ENCODE measurements at regions of chr14 and their contacts with region 1.

Region 1: GRCh38 chr14:33839193-33840076 is 111.4 kb downstream of the EGLN3 start:
- DNase-seq: no peak
- H3K4me3 ChIP-seq: no peak overlapping the region
- H3K27ac ChIP-seq: no peak overlapping the region
- H3K4me1 ChIP-seq: peaks cover 0 to 16% (median 6%) of the 10 kb centered on the region in 4 donors
- H3K27me3 ChIP-seq: no peaks in the 10 kb centered on the region
- CTCF ChIP-seq: peak; percentile 76 to 84 (median 78)
- EP300 ChIP-seq: no peak
- POLR2A ChIP-seq: no peak

Region 2: DNA sequence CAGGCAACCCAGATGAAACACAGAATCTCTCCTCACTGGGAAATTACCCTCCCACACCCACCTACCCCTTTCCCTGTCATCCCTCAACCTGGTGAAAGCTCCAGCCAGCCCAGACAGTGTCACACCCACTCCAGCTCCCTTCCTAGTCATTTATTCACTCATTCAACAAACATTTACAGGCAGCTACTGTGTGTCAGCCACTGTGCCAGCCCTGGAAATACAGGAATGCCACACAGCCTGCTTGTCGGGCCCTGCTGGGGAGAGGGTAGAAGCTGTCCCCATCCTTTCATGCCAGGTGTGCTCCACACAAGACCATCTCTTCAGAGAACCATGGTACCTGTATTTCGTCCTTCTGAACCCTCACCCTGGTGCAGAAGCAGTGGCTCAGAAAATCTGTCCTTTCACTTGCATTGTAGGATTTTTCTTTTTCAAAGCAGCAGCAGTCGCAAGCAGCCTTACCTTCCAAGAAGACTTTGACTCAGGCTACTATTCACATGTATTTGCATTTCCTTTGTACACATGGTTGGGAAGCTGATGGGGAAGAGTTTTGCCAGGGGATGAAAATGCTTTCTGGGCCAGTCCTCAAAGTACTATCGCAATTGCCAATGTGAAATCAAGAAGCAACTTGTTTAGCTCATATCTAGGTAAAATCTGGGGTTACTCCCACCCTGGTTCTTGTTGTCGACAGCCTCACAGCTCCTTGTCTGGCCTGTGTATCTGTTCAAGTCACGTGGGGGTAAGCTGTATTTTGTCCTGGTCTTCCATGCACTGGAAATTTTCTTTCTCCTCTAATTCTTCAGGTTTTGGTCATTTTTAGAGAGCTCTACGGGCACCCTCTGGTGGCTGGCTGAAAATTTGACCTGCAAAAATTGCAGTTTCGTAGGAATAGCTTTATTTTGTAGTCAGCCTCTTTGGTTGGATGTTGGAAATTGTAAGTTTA is 258.9 kb after region 1 on chr14:
- intact Hi-C with region 1: loop called (anchors 2 kb)
- DNase-seq: no peak
- H3K4me3 ChIP-seq: no peak overlapping the region
- H3K27ac ChIP-seq: no peak overlapping the region
- H3K4me1 ChIP-seq: peaks cover 0 to 5% (median 0%) of the 10 kb centered on the region in 4 donors
- H3K27me3 ChIP-seq: no peaks in the 10 kb centered on the region
- CTCF ChIP-seq: peak in 3 of 4 experiments; percentile 45 to 50 (median 47)
- EP300 ChIP-seq: no peak
- POLR2A ChIP-seq: no peak

Region 3: DNA sequence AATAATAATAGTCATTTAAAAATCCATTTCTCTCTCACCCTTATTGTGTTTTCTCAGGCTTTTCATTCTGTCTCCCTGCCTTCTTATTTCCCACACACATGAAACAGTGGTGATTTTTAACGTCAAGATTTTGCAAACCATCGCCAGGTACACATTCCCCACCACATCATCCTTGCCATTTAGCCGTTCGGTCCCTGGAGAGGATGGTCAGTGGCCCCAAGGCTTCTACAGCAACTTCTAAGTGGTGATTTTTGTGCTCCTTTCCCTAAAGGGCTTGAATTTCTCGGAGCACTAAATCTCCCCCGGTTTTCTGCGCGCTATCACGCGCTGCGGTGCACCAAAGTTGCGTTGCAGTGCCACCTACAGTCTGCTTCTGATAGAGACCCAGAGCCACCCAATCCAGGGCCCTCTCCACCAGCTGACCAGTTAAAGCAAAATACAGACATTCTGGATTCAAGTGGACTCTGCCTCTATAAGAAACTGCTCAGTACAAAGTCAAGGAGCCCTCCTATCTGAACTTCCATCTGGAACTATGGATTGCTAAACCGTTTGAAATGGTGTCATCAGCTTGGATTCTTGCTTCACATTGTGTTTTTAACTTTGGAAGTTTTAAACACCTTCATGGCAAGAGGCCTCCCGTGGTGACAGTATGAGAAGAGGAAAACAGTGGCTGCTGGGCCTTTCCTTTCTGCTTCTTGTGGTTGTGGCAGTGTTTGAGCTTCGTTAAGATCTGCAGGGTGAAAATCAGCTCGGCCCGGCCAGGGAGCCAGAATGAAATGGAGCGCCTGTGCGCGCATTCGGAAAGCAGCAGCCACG is 388.6 kb after region 1 on chr14:
- intact Hi-C with region 1: loop called (anchors 1 kb)
- DNase-seq: peak; percentile 77
- H3K4me3 ChIP-seq: peak overlapping the region in 2 of 4 donors; percentile 3 to 26
- H3K27ac ChIP-seq: peak overlapping the region in 3 of 4 donors; percentile 1 to 63 (median 56)
- H3K4me1 ChIP-seq: peaks cover 0 to 32% (median 8%) of the 10 kb centered on the region in 4 donors
- H3K27me3 ChIP-seq: no peaks in the 10 kb centered on the region
- CTCF ChIP-seq: peak; percentile 64 to 82 (median 74)
- EP300 ChIP-seq: no peak
- POLR2A ChIP-seq: no peak

Region 4: GRCh38 chr14:34300882-34301734 is 461.7 kb after region 1 on chr14:
- intact Hi-C with region 1: loop called (anchors 1 kb)
- DNase-seq: no peak
- H3K4me3 ChIP-seq: no peak overlapping the region
- H3K27ac ChIP-seq: no peak overlapping the region
- H3K4me1 ChIP-seq: peaks cover 0 to 14% (median 7%) of the 10 kb centered on the region in 4 donors
- H3K27me3 ChIP-seq: no peaks in the 10 kb centered on the region
- CTCF ChIP-seq: peak; percentile 30 to 57 (median 52)
- EP300 ChIP-seq: no peak
- POLR2A ChIP-seq: no peak

Region 5: GRCh38 chr14:34322940-34323418 is 483.5 kb after region 1 on chr14:
- intact Hi-C with region 1: loop called (anchors 5 kb)
- DNase-seq: peak; percentile 73
- H3K4me3 ChIP-seq: no peak overlapping the region
- H3K27ac ChIP-seq: no peak overlapping the region
- H3K4me1 ChIP-seq: peaks cover 0 to 9% (median 2%) of the 10 kb centered on the region in 4 donors
- H3K27me3 ChIP-seq: no peaks in the 10 kb centered on the region
- CTCF ChIP-seq: peak in 3 of 4 experiments; percentile 40 to 62 (median 46)
- EP300 ChIP-seq: no peak
- POLR2A ChIP-seq: no peak

Measured in sigmoid colon (tissue), 7 donors.